ENCODE measurements at regions of chr15 and their contacts with region 1.

Region 1: GRCh38 chr15:78859971-78860732 is 12.5 kb upstream of the MORF4L1 start:
- DNase-seq: peak; percentile 87
- H3K4me3 Mint-ChIP-seq: peak overlapping the region; percentile 70
- H3K27ac Mint-ChIP-seq: peak overlapping the region; percentile 90
- H3K4me1 Mint-ChIP-seq: no peaks in the 10 kb centered on the region
- H3K27me3 Mint-ChIP-seq: no peaks in the 10 kb centered on the region
- CTCF ChIP-seq: peak; percentile 51

Region 2: GRCh38 chr15:78811124-78811824 is 48.9 kb before region 1 on chr15 and contains the start of gene ADAMTS7:
- CTCF ChIA-PET with region 1: no interaction called
- intact Hi-C with region 1: loop called (anchors 10 kb)
- DNase-seq: peak; percentile 82
- H3K4me3 Mint-ChIP-seq: peak within 1 kb of the TSS; percentile 72
- H3K27ac Mint-ChIP-seq: no peak within 1 kb of the TSS
- H3K4me1 Mint-ChIP-seq: peaks cover 17% of the 10 kb centered on the region
- H3K27me3 Mint-ChIP-seq: peaks cover 55% of the 10 kb centered on the region
- CTCF ChIP-seq: peak; percentile 85
- total RNA-seq, gene ADAMTS7: 1.3 and 1.4 TPM in 2 replicates